ENCODE measurements at regions of chr6 and their contacts with region 1.

Region 1: GRCh38 chr6:6008648-6009421 is 2.1 kb upstream of the NRN1 start:
- DNase-seq: peak in 1 of 5 donors; percentile 33
- H3K4me3 ChIP-seq: peak overlapping the region; percentile 43 to 52
- H3K4me3 Mint-ChIP-seq: peak overlapping the region; percentile 73 to 90 (median 80)
- H3K27ac ChIP-seq: no peak overlapping the region
- H3K27ac Mint-ChIP-seq: peak overlapping the region in 2 of 7 donors; percentile 73 to 88
- H3K4me1 ChIP-seq: peaks cover 40% of the 10 kb centered on the region
- H3K4me1 Mint-ChIP-seq: peaks cover 21 to 52% (median 38%) of the 10 kb centered on the region in 4 donors
- H3K27me3 ChIP-seq: peaks cover 57% of the 10 kb centered on the region
- H3K27me3 Mint-ChIP-seq: peaks cover 43 to 49% of the 10 kb centered on the region in 2 donors

Region 2: DNA sequence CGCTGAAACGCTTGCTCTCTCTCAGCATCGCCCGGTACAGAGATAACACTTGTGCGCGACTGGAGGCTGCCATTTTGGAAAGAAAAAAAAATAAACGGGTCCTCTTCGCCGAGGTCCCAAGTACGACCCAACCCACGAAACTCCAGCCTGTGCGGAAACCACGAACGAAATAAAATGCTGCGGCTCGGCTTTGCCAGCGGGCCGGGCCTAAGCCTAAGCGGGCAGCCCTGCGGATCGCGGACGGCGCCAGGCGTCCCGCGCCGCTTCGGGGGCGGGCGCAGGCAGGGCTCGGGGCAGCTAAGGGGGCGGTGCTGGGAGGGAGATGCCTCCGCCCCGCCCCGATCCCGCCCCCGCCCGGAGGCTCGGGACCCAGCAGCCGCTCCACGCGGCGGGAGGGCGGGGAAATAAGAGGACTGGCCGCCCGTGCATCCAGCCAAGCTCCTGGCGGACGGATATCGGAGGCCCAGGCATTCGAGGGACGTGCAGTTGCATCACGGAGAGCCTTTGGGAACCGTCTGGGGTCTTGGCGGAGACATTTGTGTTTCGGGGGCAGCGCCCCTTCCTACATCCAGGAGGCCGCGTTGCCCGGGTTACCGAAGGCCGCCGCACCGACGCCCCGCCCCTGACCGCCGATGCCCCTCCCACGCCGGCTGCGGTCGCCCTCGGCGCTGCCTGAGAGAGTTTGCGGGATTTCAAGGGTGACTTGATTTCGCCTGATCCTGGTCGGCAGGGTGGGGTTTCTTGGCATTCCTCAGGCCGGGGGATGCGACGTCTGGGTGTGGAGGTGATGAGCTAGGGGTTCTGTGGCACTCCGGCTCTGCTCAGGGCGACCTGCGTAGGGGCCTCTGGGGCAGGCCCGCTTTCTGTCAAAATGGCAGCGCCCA is 747.9 kb before region 1 on chr6 and contains the starts of genes FARS2 and LYRM4:
- CTCF ChIA-PET with region 1: no interaction called
- POLR2A ChIA-PET with region 1: no interaction called
- intact Hi-C with region 1: loop called (anchors 10 kb)
- DNase-seq: peak; percentile 90 to 99 (median 96)
- H3K4me3 ChIP-seq: peak within 1 kb of the TSS; percentile 95 to 96
- H3K4me3 Mint-ChIP-seq: peak within 1 kb of the TSS; percentile 96 to 99 (median 99)
- H3K27ac ChIP-seq: peak within 1 kb of the TSS; percentile 95
- H3K27ac Mint-ChIP-seq: peak within 1 kb of the TSS; percentile 99 to 100 (median 100)
- H3K4me1 ChIP-seq: peaks cover 21% of the 10 kb centered on the region
- H3K4me1 Mint-ChIP-seq: peaks cover 18 to 40% (median 27%) of the 10 kb centered on the region in 4 donors
- H3K27me3 ChIP-seq: no peaks in the 10 kb centered on the region
- H3K27me3 Mint-ChIP-seq: no peaks in the 10 kb centered on the region
- total RNA-seq, gene FARS2: 15.6 to 19.2 TPM
- total RNA-seq, gene LYRM4: 10.6 to 14.3 TPM

Region 3: GRCh38 chr6:5471044-5471443 is 537.8 kb before region 1 on chr6:
- CTCF ChIA-PET with region 1: interaction called, 3 read pairs
- POLR2A ChIA-PET with region 1: no interaction called
- intact Hi-C with region 1: loop called (anchors 5 kb)
- DNase-seq: peak in 4 of 5 donors; percentile 36 to 59 (median 44)
- H3K4me3 ChIP-seq: no peak overlapping the region
- H3K4me3 Mint-ChIP-seq: no peak overlapping the region
- H3K27ac ChIP-seq: no peak overlapping the region
- H3K27ac Mint-ChIP-seq: no peak overlapping the region
- H3K4me1 ChIP-seq: no peaks in the 10 kb centered on the region
- H3K4me1 Mint-ChIP-seq: peaks cover 0 to 7% (median 3%) of the 10 kb centered on the region in 4 donors
- H3K27me3 ChIP-seq: no peaks in the 10 kb centered on the region
- H3K27me3 Mint-ChIP-seq: no peaks in the 10 kb centered on the region

Region 4: GRCh38 chr6:5995949-5996713 is 12.7 kb before region 1 on chr6:
- CTCF ChIA-PET with region 1: interaction called, 5 read pairs
- POLR2A ChIA-PET with region 1: interaction called, 4 read pairs
- intact Hi-C with region 1: loop called (anchors 1 kb)
- DNase-seq: peak in 2 of 5 donors; percentile 26 to 50
- H3K4me3 ChIP-seq: peak overlapping the region; percentile 63 to 81
- H3K4me3 Mint-ChIP-seq: peak overlapping the region; percentile 88 to 99 (median 94)
- H3K27ac ChIP-seq: no peak overlapping the region
- H3K27ac Mint-ChIP-seq: peak overlapping the region in 5 of 7 donors; percentile 47 to 79 (median 62)
- H3K4me1 ChIP-seq: peaks cover 55% of the 10 kb centered on the region
- H3K4me1 Mint-ChIP-seq: peaks cover 32 to 72% (median 48%) of the 10 kb centered on the region in 4 donors
- H3K27me3 ChIP-seq: peaks cover 84% of the 10 kb centered on the region
- H3K27me3 Mint-ChIP-seq: peaks cover 71 to 74% of the 10 kb centered on the region in 2 donors

Measured in CD4-positive, alpha-beta memory T cell (primary cell).